ENCODE measurements at regions of chr19 and their contacts with region 1.

Region 1: GRCh38 chr19:1761528-1762242 is 8.4 kb downstream of the ONECUT3 start:
- DNase-seq: no peak
- H3K4me3 ChIP-seq: no peak overlapping the region
- H3K27ac ChIP-seq: no peak overlapping the region
- H3K27me3 ChIP-seq: peaks cover 89% of the 10 kb centered on the region
- CTCF ChIP-seq: no peak

Region 2: DNA sequence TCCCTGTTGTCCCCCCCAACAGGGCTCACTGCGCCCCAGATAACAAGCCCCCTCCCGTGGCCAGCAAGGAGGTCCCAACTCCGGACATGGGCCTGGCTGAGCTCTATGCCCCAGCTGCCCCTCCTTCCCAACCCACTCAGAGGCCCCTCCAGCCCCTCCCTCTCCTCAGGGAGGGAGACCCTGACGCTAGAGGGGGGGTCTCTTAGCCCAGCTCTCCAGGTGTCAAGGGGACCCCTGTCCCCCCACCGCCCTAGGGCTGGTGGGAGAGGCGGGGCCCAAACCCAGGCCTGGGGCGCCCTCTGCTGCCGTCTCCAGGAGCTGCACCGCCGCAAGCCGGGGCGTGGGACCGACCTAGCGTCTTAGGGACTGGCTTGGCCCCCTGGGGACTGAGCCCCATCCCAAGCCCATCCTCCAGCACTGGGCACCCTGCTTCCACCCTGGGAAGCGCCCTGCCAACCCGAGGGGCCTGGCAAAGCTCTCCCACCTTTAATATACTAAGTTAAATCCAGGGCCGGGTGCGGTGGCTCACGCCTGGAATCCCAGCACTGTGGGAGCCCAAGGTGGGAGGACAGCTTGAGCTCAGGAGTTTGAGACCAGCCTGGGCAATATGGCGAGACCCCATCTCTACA is 760.0 kb before region 1 on chr19:
- CTCF ChIA-PET with region 1: no interaction called
- POLR2A ChIA-PET with region 1: no interaction called
- DNase-seq: no peak
- H3K4me3 ChIP-seq: no peak overlapping the region
- H3K27ac ChIP-seq: no peak overlapping the region
- H3K27me3 ChIP-seq: peaks cover 28% of the 10 kb centered on the region
- CTCF ChIP-seq: peak; percentile 78

Region 3: DNA sequence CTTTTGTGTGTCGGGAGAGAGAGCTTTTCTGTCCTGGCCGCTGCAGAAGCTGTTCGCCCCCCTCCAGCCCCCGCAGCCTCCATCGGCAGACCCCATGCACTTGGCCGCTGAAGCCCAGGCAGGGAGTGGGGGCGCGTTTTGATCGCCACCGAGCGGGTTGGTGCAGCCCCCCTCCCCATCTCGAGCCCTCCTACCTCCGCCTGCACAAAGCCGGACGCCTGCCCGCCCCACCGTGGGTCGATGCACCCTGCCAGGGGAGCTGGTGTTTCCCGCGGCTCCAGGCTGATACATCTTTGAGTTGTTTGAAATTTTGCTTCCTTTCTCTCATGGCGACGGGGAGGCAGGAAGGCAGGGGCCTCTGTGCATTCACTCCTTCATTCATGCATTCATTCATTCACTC is 24.8 kb before region 1 on chr19:
- CTCF ChIA-PET with region 1: interaction called, 4 read pairs
- POLR2A ChIA-PET with region 1: interaction called, 10 read pairs
- DNase-seq: no peak
- H3K4me3 ChIP-seq: no peak overlapping the region
- H3K27ac ChIP-seq: no peak overlapping the region
- H3K27me3 ChIP-seq: peaks cover 47% of the 10 kb centered on the region
- CTCF ChIP-seq: no peak

Region 4: DNA sequence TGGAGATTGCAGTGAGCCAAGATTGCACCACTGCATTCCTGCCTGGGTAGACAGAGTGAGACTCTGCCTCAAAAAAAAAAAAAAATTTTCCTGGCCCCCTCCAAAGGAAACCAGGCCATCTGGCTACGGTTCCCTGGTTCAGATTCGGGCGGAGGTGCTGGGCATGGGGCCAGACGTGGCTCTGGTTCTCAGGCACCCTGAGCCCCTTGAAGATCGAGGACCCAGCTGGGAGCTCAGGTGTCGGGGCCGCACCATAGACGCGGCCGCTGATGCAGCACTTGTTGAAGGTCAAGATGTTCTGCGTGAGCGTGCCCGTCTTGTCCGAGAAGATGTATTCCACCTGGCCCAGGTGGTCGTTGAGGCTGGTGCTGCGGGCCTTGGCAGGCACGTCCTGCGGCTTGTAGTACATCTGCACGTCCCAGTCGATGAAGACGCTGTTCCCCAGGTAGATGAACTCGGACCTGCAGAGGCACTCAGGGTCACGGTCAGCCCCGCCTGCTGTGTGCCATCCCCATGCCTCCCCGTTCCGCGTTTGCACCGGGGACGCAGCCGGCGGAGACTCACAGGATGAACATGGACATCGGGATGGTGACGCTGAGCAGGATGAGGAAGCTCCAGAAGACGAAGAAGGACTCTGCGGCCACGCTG is 38.1 kb after region 1 on chr19:
- CTCF ChIA-PET with region 1: no interaction called
- POLR2A ChIA-PET with region 1: no interaction called
- DNase-seq: no peak
- H3K4me3 ChIP-seq: no peak overlapping the region
- H3K27ac ChIP-seq: no peak overlapping the region
- H3K27me3 ChIP-seq: no peaks in the 10 kb centered on the region
- CTCF ChIP-seq: no peak